GM10248 (cell line): ENCODE measurements at regions of chr2 and their contacts with region 1.

Region 1: GRCh38 chr2:69724540-69725159 is 17.3 kb upstream of the ANXA4 start:
- DNase-seq: peak; percentile 71
- CTCF ChIP-seq: peak; percentile 94

Region 2: GRCh38 chr2:68925295-68925896 is 799.3 kb before region 1 on chr2:
- CTCF ChIA-PET with region 1: no interaction called
- POLR2A ChIA-PET with region 1: no interaction called
- DNase-seq: peak; percentile 58
- CTCF ChIP-seq: peak; percentile 86

Region 3: GRCh38 chr2:69559442-69560146 is 165.1 kb before region 1 on chr2:
- CTCF ChIA-PET with region 1: interaction called, 23 read pairs
- POLR2A ChIA-PET with region 1: no interaction called
- DNase-seq: peak; percentile 51
- CTCF ChIP-seq: peak; percentile 68

Region 4: DNA sequence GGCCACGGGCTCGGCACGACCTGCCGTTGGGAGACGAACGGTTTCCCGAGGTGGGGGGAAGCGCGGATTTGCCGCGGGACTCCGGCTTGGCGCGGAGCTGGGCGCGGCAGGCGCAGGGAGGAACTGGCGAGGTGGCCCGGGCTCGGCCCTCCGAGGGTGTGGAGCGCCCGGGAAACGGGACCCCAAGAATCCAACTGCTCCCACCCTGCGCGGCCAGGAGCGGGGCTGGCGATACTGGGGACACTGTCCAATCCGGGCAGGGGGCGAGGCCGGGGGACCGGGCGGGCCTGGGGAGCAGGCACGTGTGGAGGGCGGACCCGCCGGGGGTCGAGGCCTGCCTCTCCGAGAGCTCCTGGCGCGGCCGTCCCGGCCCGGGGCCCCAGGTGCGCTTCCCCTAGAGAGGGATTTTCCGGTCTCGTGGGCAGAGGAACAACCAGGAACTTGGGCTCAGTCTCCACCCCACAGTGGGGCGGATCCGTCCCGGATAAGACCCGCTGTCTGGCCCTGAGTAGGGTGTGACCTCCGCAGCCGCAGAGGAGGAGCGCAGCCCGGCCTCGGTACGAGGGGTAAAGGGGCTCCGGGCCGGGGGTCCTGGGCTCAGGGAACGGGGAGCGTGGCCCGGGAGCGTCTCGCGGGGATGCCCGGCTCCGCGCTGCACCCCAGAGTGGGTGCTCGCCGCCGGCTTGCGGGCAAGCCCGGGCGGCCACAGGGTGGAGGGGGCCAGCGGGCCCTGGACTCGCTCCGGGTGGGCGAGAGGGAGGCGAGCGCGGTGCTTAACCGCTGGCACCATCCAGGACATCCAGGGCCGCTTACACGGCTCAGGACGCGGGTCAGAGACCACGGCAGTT is 17.2 kb after region 1 on chr2 and contains the start of gene ANXA4:
- CTCF ChIA-PET with region 1: interaction called, 90 read pairs
- POLR2A ChIA-PET with region 1: no interaction called
- DNase-seq: peak; percentile 86
- CTCF ChIP-seq: no peak

Region 5: GRCh38 chr2:69770193-69771146 is 45.8 kb after region 1 on chr2:
- CTCF ChIA-PET with region 1: interaction called, 33 read pairs
- POLR2A ChIA-PET with region 1: no interaction called
- DNase-seq: no peak
- CTCF ChIP-seq: no peak

Region 6: DNA sequence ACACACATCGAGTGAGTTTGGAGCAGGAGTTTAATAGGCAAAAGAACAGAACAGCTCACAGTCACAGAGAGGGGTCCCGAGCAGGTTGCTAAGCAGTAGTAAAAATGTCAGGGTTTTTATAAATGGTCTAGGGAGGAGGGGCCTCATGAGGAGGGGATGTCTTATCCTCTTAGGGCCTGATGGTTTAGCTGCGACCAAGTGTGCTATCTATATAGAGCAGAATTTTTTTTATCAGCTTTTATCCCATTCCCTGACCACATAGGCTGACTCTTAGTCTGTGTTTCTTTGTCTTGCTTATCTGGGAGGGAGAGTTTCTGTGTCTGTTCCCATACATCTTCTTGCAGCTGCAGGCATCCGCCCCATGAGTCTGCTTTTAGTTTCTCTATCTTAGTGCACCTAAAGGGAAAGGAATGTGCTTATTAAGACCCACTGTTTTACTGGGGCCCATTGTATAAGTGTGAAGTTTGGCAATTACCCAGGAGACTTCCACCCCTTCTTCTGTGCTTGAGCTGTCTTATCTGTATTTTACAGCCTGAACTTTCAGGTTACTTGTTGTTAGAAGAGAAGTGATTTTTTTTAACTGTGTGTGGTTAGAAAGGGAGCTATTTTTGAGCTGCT is 74.4 kb after region 1 on chr2:
- CTCF ChIA-PET with region 1: interaction called, 69 read pairs
- POLR2A ChIA-PET with region 1: interaction called, 5 read pairs
- DNase-seq: no peak
- CTCF ChIP-seq: no peak

Region 7: GRCh38 chr2:69837533-69837932 is 112.9 kb after region 1 on chr2:
- CTCF ChIA-PET with region 1: interaction called, 11 read pairs
- POLR2A ChIA-PET with region 1: no interaction called
- DNase-seq: peak; percentile 16
- CTCF ChIP-seq: no peak

Region 8: GRCh38 chr2:70070541-70071268 is 346.1 kb after region 1 on chr2:
- CTCF ChIA-PET with region 1: interaction called, 25 read pairs
- POLR2A ChIA-PET with region 1: no interaction called
- DNase-seq: peak; percentile 87
- CTCF ChIP-seq: peak; percentile 79